A549 (cell line): ENCODE measurements at regions of chr14 and their contacts with region 1.

Region 1: DNA sequence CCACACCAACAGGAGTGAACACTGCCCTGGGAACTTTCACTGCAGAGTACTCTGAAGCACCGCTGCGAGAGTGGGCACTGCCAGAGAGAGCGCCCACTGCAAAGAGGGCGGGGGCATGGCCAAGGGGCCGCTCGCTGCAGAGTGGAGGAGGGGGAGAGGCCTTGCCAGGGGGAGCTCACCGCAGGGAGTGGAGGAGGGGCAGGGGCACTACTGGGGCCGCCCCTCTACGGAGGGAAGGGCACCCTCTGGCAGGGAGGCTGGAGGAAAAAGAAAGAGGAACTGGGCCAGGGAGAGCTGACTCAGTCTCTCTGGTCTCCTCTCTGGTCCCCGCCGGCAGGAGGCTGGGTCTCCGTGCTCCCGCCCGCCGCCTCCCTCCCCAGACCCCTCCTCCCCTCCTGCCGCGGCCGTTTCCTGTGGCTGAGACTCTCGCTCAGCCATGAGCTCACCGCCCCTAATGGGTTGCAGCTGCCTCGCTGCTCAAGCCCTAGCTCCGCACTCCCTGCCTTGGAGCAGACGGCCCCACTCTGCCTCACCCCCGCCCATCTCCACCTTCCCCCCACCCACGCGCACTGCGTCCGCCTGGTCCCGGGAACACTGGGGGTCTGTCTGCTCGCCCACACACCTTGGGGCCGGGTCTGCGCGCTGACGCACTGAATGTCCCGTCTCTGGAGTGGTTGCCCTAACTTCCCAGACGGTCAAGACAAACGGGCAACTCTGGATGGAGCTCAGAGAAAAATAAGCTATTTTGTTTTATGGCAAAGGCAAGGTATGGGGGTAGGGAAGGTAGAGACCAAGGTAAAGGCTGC is 1.3 kb downstream of the ARHGEF40 start:
- DNase-seq: peak; percentile 37 to 58
- ATAC-seq: peak; percentile 45 to 67
- H3K4me3 ChIP-seq: peak overlapping the region; percentile 79
- H3K27ac ChIP-seq: peak overlapping the region; percentile 83 to 95
- H3K4me1 ChIP-seq: peaks cover 23% of the 10 kb centered on the region
- CTCF ChIP-seq: no peak
- EP300 ChIP-seq: no peak
- POLR2A ChIP-seq: no peak; the same call in 1 of the 2 replicates
- RAD21 ChIP-seq: no peak

Region 2: DNA sequence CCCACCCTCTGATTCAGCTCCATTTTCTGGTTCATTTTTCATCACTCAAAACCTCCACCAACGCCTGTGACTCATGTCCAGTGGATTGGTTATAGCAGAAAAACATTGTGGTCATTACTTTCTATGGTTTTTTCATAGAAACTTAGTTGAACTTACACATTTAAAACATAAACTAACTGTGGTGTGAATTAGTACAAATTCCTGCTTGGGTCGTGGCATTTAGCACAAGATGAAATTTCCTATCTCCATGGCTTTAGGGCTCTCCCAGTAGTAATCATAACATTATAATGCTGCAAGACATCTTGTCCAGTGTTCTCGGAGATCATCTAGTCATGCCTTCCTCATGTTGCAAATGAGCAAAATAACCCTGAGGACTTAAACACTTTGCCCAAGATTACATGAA is 22.2 kb before region 1 on chr14:
- CTCF ChIA-PET with region 1: interaction called, 44 read pairs
- POLR2A ChIA-PET with region 1: no interaction called
- DNase-seq: no peak
- ATAC-seq: no peak
- H3K4me3 ChIP-seq: no peak overlapping the region
- H3K27ac ChIP-seq: no peak overlapping the region
- H3K4me1 ChIP-seq: peaks cover 2% of the 10 kb centered on the region; the same call in 1 of the 3 replicates
- CTCF ChIP-seq: no peak
- EP300 ChIP-seq: no peak
- POLR2A ChIP-seq: no peak
- RAD21 ChIP-seq: no peak

Region 3: DNA sequence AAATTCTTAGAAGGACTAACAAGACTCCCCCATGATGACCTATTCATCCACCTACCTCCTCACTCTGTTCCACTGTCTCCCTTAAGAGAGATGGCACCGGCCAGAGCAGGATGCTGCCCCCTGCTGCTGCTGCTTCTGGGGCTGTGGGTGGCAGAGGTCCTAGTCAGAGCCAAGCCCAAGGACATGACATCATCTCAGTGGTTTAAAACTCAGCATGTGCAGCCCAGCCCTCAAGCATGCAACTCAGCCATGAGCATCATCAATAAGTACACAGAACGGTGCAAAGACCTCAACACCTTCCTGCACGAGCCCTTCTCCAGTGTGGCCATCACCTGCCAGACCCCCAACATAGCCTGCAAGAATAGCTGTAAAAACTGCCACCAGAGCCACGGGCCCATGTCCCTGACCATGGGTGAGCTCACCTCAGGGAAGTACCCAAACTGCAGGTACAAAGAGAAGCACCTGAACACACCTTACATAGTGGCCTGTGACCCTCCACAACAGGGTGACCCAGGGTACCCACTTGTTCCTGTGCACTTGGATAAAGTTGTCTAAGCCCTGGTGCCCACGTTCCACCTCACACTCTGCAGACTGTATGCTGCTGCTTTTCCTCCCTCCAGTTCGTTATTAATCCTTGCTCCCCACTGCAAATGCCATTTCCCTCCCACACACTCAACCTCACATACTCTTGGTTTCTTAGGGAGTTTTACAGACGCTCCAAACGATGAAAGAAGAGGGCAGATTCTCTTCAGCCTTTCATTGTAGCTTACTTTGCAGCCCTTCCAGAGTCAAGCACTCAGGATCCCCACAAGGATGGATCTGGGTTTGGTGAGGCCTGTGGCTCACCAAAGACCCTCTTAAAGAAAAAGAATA is 13.4 kb before region 1 on chr14 and contains the start of gene RNASE8:
- CTCF ChIA-PET with region 1: interaction called, 10 read pairs
- POLR2A ChIA-PET with region 1: interaction called, 3 read pairs
- DNase-seq: no peak
- ATAC-seq: peak in 1 of 2 experiments; percentile 46; a peak in 2 of 6 replicates
- H3K4me3 ChIP-seq: no peak within 1 kb of the TSS
- H3K27ac ChIP-seq: no peak within 1 kb of the TSS
- H3K4me1 ChIP-seq: peaks cover 29% of the 10 kb centered on the region
- CTCF ChIP-seq: no peak
- EP300 ChIP-seq: no peak
- POLR2A ChIP-seq: no peak
- RAD21 ChIP-seq: no peak
- polyA plus RNA-seq, gene RNASE8: not detected in 2 replicates

Region 4: GRCh38 chr14:21084988-21085853 is 13.8 kb after region 1 on chr14:
- CTCF ChIA-PET with region 1: interaction called, 369 read pairs
- POLR2A ChIA-PET with region 1: interaction called, 11 read pairs
- DNase-seq: no peak
- ATAC-seq: peak in 1 of 2 experiments; percentile 8; a peak in 2 of 6 replicates
- H3K4me3 ChIP-seq: no peak overlapping the region
- H3K27ac ChIP-seq: no peak overlapping the region
- H3K4me1 ChIP-seq: peaks cover 20% of the 10 kb centered on the region; the same call in 1 of the 3 replicates
- CTCF ChIP-seq: no peak
- EP300 ChIP-seq: no peak
- POLR2A ChIP-seq: no peak
- RAD21 ChIP-seq: no peak